Right ventricle myocardium inferior (tissue), 1 donor: ENCODE measurements at regions of chr2 and their contacts with region 1.

Region 1: DNA sequence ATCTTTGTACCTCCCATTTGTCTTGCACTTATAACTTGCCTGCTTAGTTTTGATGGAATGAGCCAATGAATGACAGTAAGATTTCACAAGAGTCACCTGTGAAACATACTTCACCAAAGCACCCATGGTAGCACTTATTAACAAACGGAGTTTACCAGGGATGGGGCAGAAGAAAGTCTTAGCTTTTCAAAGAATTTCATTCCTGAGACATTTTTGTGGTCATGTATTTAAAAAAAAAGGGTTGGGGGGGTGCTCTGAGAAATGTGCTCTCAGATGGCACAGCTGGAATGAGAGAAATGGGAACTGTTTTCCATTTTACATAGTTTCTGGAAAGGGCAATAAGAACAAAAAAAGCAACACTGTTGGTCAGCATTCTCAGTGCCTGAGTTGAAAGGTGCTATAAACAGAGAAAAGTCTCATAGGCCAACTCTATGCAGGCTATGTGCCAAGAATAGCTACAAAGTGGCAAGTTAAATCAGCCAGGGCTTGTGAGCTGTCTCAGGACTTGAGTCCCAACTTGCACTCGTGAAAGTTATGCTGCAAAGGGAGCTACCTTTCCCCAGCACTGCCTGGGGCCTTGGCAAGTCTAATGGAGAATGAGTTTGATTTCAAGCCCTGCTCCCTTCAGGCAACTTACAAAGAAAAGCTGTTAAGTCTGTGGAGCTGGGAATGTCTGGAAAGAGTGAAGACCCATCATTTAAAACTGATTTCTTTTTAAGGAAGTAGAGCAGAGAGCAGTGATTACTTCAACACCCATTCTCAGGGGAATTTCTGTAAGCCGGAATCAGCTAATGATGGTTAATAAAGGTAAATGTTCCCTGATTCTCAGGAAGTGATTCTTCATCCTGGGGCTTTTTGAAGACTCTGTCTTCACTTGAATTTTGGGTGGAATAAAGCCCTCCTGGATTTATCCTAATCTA is 170.6 kb downstream of the SLC8A1 start:
- DNase-seq: no peak
- ATAC-seq: peak; percentile 81

Region 2: DNA sequence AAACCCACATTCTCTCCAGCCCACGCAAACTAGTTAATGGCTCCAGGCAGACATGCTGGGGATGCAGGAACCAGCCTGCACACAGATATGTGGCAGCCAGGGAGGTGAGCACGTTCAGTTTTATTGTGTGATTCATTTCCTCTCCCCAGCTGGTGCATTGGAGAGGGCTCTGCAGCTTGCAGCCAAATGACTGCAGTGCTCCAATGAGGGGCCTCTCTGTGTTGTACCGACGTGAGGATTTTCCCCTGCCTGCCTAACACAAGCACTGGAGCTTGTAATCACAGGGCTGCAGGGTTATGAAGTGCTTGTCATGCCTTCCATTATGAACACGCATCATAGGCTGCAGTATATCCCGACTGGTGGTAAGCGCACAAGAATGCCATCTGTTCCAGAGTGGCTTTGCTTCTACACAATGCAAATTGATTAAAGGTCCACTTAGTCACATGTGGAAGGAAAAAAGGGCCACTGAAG is 410.0 kb before region 1 on chr2:
- intact Hi-C with region 1: no loop called
- DNase-seq: no peak
- ATAC-seq: no peak

Region 3: DNA sequence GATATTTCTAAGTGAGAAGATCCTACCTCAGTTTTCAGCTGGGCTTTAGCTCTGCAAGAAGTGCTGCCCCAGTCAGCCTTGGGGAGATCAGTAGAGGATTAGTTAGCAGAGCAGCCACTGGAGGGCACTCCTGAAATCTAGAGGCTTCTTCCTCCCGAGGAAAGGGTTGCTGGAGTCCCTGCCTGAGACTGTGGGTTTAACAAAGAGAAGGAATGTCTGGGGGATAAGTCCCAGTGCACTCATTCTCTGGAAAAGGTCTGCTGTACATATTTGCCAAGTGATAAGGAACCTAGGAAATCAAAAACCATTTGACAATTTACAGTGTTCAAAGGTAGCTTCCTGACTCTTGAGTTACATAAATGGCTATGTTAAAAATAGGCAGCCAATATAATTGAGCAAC is 36.6 kb before region 1 on chr2:
- intact Hi-C with region 1: loop called (anchors 5 kb)
- DNase-seq: peak; percentile 53
- ATAC-seq: peak; percentile 43